ENCODE measurements at regions of chr12 and their contacts with region 1.

Region 1: DNA sequence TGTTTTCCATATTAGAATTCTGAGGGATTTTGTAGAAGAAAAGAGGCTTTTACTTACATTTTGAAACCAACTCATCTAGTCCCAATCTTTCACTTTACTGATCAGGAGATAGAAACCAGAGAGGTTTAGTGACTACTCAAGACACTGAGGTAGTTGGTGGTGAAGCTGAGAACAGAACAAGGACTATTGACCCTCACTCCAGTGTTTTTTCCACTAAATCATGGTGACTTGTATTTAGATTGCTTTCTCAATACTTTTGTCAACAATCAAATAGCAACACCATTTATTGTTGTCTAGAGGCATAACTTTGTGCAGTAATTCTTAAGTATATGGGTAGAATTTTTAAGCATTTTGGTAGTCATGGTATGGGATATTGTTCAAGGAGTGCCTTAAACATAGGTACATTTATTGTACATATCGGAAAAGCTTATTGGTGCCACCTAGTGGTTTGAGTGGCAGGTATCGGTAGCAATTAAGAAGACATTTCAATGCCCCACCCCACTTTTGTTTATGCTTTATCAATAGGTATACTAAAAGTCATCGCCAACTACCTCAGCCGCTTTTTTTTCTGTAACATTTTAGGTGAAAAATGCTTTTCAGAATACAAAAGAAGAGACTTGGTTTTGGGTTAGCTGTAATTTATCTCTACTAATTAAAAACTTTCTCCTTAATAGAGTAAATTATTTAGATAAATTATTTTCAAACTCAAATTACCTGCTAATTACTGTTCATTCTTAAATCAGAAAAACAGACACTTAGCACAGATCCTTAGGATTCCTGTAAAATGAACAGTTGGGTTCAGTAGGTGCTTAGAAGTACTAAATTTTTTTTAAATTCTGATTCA is 47.3 kb upstream of the PAWR start:
- DNase-seq: peak; percentile 27
- ATAC-seq: peak; percentile 90
- H3K4me3 ChIP-seq: no peak overlapping the region
- H3K27ac ChIP-seq: peak overlapping the region; percentile 25; the same call in 1 of the 2 replicates
- H3K4me1 ChIP-seq: no peaks in the 10 kb centered on the region
- H3K27me3 ChIP-seq: no peaks in the 10 kb centered on the region
- CTCF ChIP-seq: peak; percentile 73; the same call in 1 of the 2 replicates

Region 2: GRCh38 chr12:79555028-79555930 is 182.8 kb before region 1 on chr12:
- CTCF ChIA-PET with region 1: no interaction called
- POLR2A ChIA-PET with region 1: no interaction called
- in situ Hi-C with region 1: no loop called
- intact Hi-C with region 1: loop called (anchors 5 kb)
- DNase-seq: no peak
- ATAC-seq: no peak
- H3K4me3 ChIP-seq: no peak overlapping the region
- H3K27ac ChIP-seq: peak overlapping the region; percentile 55; the same call in 1 of the 2 replicates
- H3K4me1 ChIP-seq: peaks cover 15% of the 10 kb centered on the region
- H3K27me3 ChIP-seq: no peaks in the 10 kb centered on the region
- CTCF ChIP-seq: peak; percentile 62; the same call in 1 of the 2 replicates

Region 3: DNA sequence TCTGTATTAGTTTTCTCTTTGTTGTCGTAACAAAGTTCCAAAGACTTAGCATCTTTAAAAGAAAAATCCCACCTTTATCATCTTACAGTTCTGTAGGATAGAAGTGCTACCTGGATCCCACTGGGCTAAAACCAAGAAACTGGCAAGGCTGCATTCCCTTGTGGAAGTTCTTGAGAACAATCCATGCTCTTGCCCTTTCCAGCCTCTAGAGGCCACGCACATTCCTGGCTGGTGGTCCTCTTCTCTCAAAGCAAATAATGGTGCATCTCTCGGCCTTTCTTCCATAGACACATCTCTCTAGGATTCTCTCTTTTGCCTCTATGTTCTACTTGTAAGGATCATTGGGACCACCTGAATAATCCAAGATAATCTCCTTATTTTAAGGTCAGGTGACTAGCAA is 39.1 kb before region 1 on chr12:
- CTCF ChIA-PET with region 1: no interaction called
- POLR2A ChIA-PET with region 1: no interaction called
- in situ Hi-C with region 1: no loop called
- intact Hi-C with region 1: no loop called
- DNase-seq: no peak
- ATAC-seq: no peak
- H3K4me3 ChIP-seq: no peak overlapping the region
- H3K27ac ChIP-seq: no peak overlapping the region
- H3K4me1 ChIP-seq: no peaks in the 10 kb centered on the region
- H3K27me3 ChIP-seq: no peaks in the 10 kb centered on the region
- CTCF ChIP-seq: no peak

Measured in Panc1 (cell line).